Endothelial cell of umbilical vein (primary cell): ENCODE measurements at regions of chr5 and their contacts with region 1.

Region 1: DNA sequence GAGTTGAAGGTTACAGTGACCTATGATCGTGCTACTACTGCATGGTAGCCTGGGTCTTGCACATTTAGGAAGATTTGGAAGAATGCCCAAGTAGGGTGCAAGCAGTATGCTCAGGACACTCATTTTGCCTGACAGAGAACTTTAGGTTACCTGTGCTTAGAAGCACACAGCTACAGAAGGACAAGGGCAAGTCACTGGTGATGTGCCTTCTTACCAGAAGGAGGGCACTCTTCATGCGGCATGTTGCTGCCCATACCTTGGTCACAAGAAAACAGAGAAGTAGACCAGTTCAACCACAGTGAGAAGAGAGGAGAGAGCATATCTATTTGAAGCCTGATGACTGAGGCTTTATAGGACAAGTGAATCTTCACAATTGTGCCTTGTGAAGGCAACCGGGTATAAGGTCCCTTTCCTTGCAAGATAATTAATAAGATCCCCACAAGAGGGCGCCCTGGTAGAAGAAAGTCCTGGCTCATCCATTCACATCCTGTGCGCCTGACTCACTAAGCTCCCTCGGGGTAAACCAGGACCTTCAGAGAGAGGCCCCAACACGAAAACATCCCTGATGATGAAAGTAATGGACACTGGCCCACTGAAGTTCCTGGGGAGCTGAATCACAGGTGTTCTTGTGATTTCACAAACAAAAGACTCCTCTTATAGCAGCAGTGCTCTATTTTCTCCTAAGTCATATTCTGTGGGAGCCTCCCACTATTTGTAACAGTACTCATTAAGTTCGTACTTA is 38.1 kb upstream of the STARD4 start:
- DNase-seq: peak; percentile 96
- H3K4me3 ChIP-seq: peak overlapping the region in 1 of 3 experiments; percentile 37
- H3K27ac ChIP-seq: peak overlapping the region; percentile 98
- H3K4me1 ChIP-seq: peaks cover 25% of the 10 kb centered on the region
- H3K27me3 ChIP-seq: no peaks in the 10 kb centered on the region
- CTCF ChIP-seq: peak; percentile 51 to 60
- POLR2A ChIP-seq: no peak

Region 2: GRCh38 chr5:111271885-111272284 is 278.6 kb before region 1 on chr5:
- CTCF ChIA-PET with region 1: no interaction called
- POLR2A ChIA-PET with region 1: no interaction called
- dilution Hi-C with region 1: no loop called
- intact Hi-C with region 1: no loop called
- DNase-seq: no peak
- H3K4me3 ChIP-seq: no peak overlapping the region
- H3K27ac ChIP-seq: no peak overlapping the region
- H3K4me1 ChIP-seq: no peaks in the 10 kb centered on the region
- H3K27me3 ChIP-seq: no peaks in the 10 kb centered on the region
- CTCF ChIP-seq: no peak
- POLR2A ChIP-seq: no peak

Region 3: DNA sequence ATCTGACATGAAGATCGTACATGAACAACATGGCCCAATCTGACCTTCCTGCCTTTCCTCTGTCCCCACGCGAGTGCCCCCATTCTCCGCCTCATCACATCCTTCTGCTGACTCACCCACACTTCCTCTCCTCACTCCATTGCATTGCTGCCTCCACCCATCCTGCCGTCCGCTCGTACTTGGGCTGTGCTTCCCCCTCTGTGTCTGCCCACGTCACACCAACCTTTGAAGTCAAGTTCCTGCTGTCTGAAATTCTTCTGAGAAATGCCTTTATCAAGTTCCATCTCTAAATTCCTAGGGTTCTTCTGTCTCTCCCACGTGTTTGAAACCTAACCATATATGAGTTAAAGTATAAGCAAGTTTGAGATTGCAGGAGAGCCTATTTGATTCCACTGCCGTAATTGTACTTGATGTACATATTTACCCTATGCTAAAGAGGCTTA is 20.1 kb before region 1 on chr5:
- CTCF ChIA-PET with region 1: interaction called, 70 read pairs
- POLR2A ChIA-PET with region 1: no interaction called
- dilution Hi-C with region 1: no loop called
- intact Hi-C with region 1: loop called (anchors 1 kb)
- DNase-seq: peak; percentile 90
- H3K4me3 ChIP-seq: no peak overlapping the region
- H3K27ac ChIP-seq: peak overlapping the region; percentile 84
- H3K4me1 ChIP-seq: peaks cover 10% of the 10 kb centered on the region
- H3K27me3 ChIP-seq: no peaks in the 10 kb centered on the region
- CTCF ChIP-seq: no peak
- POLR2A ChIP-seq: no peak

Region 4: DNA sequence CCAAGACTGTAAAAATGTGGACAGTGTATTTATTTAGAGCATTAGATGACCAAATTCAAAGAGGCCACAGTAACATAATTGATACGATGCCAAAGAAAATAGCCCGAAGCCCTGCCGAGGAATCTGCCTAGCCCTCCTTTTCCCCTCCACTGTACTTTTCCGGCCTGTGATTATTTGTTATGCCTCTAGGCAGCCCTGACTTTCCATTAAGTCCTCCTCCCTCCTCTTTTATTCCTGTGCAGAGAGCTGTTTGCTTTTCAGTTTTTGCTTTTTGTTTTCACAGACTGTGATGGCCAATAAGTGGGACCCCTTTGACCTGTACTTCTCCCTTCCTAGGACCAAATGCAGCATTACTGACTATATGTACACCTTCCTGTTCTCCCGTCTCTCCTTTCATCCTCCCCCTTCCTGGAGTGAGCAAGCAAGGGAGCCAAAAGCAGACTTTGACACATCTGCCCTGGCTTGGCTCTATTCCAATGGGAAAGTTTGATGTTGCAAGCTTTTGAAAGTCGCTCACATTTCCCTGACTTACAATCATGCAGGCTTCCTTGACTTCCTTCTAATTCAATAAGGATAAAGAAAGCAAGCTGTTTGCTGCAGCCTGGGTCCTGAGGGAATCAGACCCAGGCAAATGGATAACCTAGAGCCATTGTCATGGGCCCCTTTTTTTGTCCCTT is 130.4 kb after region 1 on chr5:
- CTCF ChIA-PET with region 1: interaction called, 30 read pairs
- POLR2A ChIA-PET with region 1: interaction called, 5 read pairs
- dilution Hi-C with region 1: no loop called
- intact Hi-C with region 1: loop called (anchors 1 kb)
- DNase-seq: peak; percentile 99
- H3K4me3 ChIP-seq: peak overlapping the region in 1 of 3 experiments; percentile 13
- H3K27ac ChIP-seq: peak overlapping the region; percentile 94
- H3K4me1 ChIP-seq: peaks cover 27% of the 10 kb centered on the region
- H3K27me3 ChIP-seq: no peaks in the 10 kb centered on the region
- CTCF ChIP-seq: no peak
- POLR2A ChIP-seq: no peak

Region 5: GRCh38 chr5:111748304-111748763 is 197.9 kb after region 1 on chr5:
- CTCF ChIA-PET with region 1: interaction called, 9 read pairs
- POLR2A ChIA-PET with region 1: no interaction called
- dilution Hi-C with region 1: no loop called
- intact Hi-C with region 1: loop called (anchors 2 kb)
- DNase-seq: peak; percentile 95
- H3K4me3 ChIP-seq: peak overlapping the region in 1 of 3 experiments; percentile 29
- H3K27ac ChIP-seq: peak overlapping the region; percentile 71
- H3K4me1 ChIP-seq: peaks cover 26% of the 10 kb centered on the region
- H3K27me3 ChIP-seq: no peaks in the 10 kb centered on the region
- CTCF ChIP-seq: no peak
- POLR2A ChIP-seq: no peak

Region 6: DNA sequence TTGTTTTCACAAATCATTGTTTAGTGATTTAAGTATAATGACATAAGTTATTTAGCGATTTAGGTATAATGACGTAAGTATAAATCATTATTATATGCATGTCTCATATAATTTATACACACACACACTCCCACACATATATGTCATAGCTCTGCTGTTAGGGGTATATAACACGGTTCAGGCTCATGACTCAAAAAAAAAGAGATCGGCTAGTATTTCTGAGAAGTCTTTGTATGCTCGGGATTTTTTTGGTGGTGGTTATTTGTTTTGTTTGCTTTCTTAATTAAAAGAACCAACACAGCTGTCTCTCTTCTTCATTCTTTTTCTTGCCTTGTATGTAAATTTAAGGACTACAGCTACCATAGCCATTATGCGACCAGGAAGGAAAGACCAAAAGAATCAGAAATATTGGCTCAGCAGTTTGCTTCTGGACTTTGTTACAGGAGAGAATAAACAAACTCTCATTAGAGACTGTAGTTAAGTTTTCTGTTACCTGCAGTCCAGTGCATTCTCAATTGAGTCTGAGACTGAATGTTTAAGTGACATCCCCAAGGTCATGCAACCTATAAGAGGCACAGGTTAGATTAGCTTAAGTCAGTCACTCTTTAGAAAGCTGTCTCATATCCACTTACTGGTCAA is 289.7 kb after region 1 on chr5:
- CTCF ChIA-PET with region 1: interaction called, 4 read pairs
- POLR2A ChIA-PET with region 1: no interaction called
- dilution Hi-C with region 1: no loop called
- intact Hi-C with region 1: loop called (anchors 2 kb)
- DNase-seq: no peak
- H3K4me3 ChIP-seq: no peak overlapping the region
- H3K27ac ChIP-seq: no peak overlapping the region
- H3K4me1 ChIP-seq: no peaks in the 10 kb centered on the region
- H3K27me3 ChIP-seq: no peaks in the 10 kb centered on the region
- CTCF ChIP-seq: no peak
- POLR2A ChIP-seq: no peak

Region 7: DNA sequence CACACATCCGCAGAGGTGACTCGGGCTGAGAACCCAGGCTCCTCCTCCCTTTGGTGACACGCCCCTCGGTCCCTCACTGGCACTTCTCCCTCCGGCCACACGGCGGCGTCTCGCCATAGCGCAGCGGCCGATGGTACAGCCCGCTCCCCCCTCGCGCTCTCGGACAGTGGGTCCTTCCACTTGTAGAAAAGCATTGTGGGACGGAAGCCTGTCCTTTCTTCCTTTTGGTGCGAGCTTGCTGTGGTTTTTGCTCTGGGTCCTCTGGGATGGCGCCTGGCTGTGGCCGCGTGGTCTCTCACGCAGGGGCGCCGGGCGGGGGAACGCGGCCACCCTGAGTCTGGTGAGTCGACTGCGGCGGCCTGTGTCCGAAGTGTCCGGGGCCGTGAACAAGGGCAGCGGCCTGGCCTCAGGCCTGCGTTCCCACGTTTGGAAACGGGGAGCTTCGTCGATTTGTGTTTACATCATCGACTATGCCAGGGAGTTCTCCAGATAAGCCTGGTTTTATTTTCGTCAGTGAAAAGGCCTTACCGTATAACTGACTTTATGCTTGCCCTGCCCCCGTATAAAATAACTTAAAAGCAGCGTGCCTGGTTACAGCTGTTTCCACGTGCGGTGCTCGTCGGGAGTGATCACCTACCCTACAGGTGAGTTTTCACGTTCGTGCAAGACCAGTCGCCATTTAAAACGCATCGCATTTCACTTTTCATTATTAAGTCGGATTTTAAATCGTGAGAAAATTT is 610.4 kb after region 1 on chr5:
- CTCF ChIA-PET with region 1: interaction called, 7 read pairs
- POLR2A ChIA-PET with region 1: no interaction called
- dilution Hi-C with region 1: no loop called
- intact Hi-C with region 1: loop called (anchors 5 kb)
- DNase-seq: peak; percentile 92
- H3K4me3 ChIP-seq: peak overlapping the region; percentile 90 to 100 (median 92)
- H3K27ac ChIP-seq: peak overlapping the region; percentile 72
- H3K4me1 ChIP-seq: peaks cover 17% of the 10 kb centered on the region
- H3K27me3 ChIP-seq: peaks cover 0 to 4% of the 10 kb centered on the region in 2 experiments
- CTCF ChIP-seq: peak; percentile 99
- POLR2A ChIP-seq: peak; percentile 98